ENCODE measurements at regions of chr7 and their contacts with region 1.

Region 1: GRCh38 chr7:23315366-23315765 is 16.2 kb downstream of the MALSU1 start:
- DNase-seq: no peak
- ATAC-seq: no peak
- H3K4me3 ChIP-seq: no peak overlapping the region
- H3K27ac ChIP-seq: no peak overlapping the region
- H3K4me1 ChIP-seq: peaks cover 17% of the 10 kb centered on the region
- H3K27me3 ChIP-seq: no peaks in the 10 kb centered on the region
- CTCF ChIP-seq: no peak
- EP300 ChIP-seq: no peak
- POLR2A ChIP-seq: no peak
- RAD21 ChIP-seq: no peak

Region 2: DNA sequence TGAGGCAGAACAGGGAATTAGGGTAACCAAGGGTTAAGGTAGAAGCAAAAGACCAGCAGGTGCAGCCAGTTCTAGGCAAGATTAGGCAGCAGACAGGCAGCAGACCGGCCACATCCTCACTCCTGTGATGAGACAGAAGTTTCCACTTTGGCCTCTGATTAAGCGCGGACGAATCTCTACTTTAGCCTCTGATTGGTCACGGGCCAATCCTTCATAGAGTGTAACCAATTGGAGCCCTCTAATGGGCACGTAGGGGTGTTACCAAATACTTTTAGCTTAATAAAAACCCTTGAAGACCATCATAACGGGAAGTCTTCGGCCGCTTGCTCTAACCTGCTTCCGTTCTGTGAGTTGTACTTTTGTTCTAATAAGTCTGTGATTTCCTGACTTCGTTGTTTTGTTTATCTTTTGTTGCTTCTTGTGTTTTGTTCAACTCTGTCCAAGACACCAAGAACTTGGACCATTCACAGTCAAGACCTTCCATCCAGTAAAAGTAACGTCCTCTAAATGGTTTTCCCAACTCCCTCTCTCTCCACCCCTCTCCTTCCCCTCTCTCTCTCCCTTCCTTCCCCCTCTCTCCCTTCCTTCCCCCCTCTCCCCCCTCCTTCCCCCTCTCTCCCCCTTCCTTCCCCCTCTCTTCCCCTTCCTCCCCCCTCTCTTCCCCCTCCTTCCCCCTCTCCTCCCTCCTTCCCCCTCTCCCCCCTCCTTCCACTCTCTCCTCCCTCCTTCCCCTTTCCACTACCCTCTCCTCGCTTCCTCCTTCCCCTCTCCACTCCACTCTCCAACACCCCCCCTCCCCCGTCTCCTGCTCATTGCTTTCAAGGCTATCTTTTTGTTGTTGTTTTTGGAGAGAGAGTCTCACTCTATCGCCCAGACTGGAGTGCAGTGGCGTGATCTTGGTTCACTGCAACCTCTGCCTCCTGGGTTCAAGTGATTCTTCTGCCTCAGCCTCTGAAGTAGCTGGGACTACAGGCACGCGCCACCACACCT is 29.4 kb before region 1 on chr7:
- CTCF ChIA-PET with region 1: no interaction called
- POLR2A ChIA-PET with region 1: no interaction called
- in situ Hi-C with region 1: no loop called
- intact Hi-C with region 1: no loop called
- DNase-seq: no peak
- ATAC-seq: no peak
- H3K4me3 ChIP-seq: no peak overlapping the region
- H3K27ac ChIP-seq: no peak overlapping the region
- H3K4me1 ChIP-seq: peaks cover 54% of the 10 kb centered on the region
- H3K27me3 ChIP-seq: no peaks in the 10 kb centered on the region
- CTCF ChIP-seq: no peak
- EP300 ChIP-seq: no peak
- POLR2A ChIP-seq: no peak
- RAD21 ChIP-seq: no peak

Region 3: GRCh38 chr7:23334482-23335056 is 19.2 kb after region 1 on chr7:
- CTCF ChIA-PET with region 1: no interaction called
- POLR2A ChIA-PET with region 1: interaction called, 14 read pairs
- in situ Hi-C with region 1: no loop called
- intact Hi-C with region 1: no loop called
- DNase-seq: peak; percentile 94
- ATAC-seq: peak; percentile 76
- H3K4me3 ChIP-seq: no peak overlapping the region
- H3K27ac ChIP-seq: peak overlapping the region; percentile 84
- H3K4me1 ChIP-seq: peaks cover 78% of the 10 kb centered on the region
- H3K27me3 ChIP-seq: no peaks in the 10 kb centered on the region
- CTCF ChIP-seq: no peak
- EP300 ChIP-seq: peak; percentile 31 to 98; a peak in 2 of 4 replicates
- POLR2A ChIP-seq: no peak
- RAD21 ChIP-seq: no peak

Region 4: DNA sequence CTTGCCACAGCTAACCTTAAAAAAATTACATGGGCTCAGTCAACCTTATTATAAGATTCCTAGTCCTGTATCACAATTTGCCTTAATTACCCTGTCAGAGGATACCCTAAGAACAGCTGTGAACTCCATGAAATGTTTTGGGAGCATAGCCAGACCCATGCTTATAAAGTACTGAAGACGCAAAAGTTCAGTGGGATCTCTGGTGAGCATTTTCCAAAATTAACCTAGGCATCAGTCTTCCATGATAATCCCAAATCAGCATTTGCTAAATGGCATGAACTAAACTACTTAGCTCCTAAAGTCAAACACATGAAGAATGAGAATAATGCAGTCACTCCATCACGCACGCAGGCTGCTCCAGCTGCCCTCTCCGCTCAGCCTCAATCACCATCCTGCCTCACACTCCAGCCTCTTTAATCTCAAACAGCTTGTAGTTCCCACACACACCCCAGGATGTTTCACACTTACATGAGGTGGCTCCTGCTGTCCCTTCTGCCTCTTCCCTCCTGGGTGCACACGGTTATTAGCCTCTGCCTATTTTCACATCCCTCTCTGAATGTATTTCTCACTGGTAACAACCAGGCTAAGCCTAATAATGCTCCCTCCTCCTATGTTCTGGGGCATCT is 139.6 kb after region 1 on chr7:
- CTCF ChIA-PET with region 1: no interaction called
- POLR2A ChIA-PET with region 1: no interaction called
- in situ Hi-C with region 1: no loop called
- intact Hi-C with region 1: no loop called
- DNase-seq: no peak
- ATAC-seq: no peak
- H3K4me3 ChIP-seq: no peak overlapping the region
- H3K27ac ChIP-seq: no peak overlapping the region
- H3K4me1 ChIP-seq: 0 out of 2 replicates have a peak, but pooled peaks cover 13% of the 10 kb centered on the region
- H3K27me3 ChIP-seq: no peaks in the 10 kb centered on the region
- CTCF ChIP-seq: no peak
- EP300 ChIP-seq: no peak
- POLR2A ChIP-seq: no peak
- RAD21 ChIP-seq: no peak

Measured in HepG2 (cell line).